ENCODE measurements at regions of chr1 and their contacts with region 1.

Region 1: GRCh38 chr1:214248311-214249085 is 32.5 kb upstream of the SMYD2 start:
- DNase-seq: no peak
- H3K4me3 ChIP-seq: no peak overlapping the region
- H3K27ac ChIP-seq: no peak overlapping the region
- H3K4me1 ChIP-seq: no peaks in the 10 kb centered on the region
- H3K27me3 ChIP-seq: peaks cover 4% of the 10 kb centered on the region
- CTCF ChIP-seq: no peak
- EP300 ChIP-seq: no peak
- POLR2A ChIP-seq: no peak

Region 2: GRCh38 chr1:214187121-214187900 is 61.2 kb before region 1 on chr1:
- in situ Hi-C with region 1: loop called in 1 of 4 experiments (anchors 10 kb)
- intact Hi-C with region 1: no loop called
- DNase-seq: no peak
- H3K4me3 ChIP-seq: peak overlapping the region in 1 of 4 donors; percentile 28
- H3K27ac ChIP-seq: no peak overlapping the region
- H3K4me1 ChIP-seq: peaks cover 0 to 6% (median 2%) of the 10 kb centered on the region in 4 donors
- H3K27me3 ChIP-seq: peaks cover 65% of the 10 kb centered on the region
- CTCF ChIP-seq: no peak
- EP300 ChIP-seq: no peak
- POLR2A ChIP-seq: no peak

Region 3: GRCh38 chr1:214213136-214213535 is 35.4 kb before region 1 on chr1:
- in situ Hi-C with region 1: no loop called
- intact Hi-C with region 1: no loop called
- DNase-seq: no peak
- H3K4me3 ChIP-seq: no peak overlapping the region
- H3K27ac ChIP-seq: no peak overlapping the region
- H3K4me1 ChIP-seq: peaks cover 0 to 4% (median 3%) of the 10 kb centered on the region in 4 donors
- H3K27me3 ChIP-seq: peaks cover 2% of the 10 kb centered on the region
- CTCF ChIP-seq: no peak
- EP300 ChIP-seq: no peak
- POLR2A ChIP-seq: no peak

Region 4: DNA sequence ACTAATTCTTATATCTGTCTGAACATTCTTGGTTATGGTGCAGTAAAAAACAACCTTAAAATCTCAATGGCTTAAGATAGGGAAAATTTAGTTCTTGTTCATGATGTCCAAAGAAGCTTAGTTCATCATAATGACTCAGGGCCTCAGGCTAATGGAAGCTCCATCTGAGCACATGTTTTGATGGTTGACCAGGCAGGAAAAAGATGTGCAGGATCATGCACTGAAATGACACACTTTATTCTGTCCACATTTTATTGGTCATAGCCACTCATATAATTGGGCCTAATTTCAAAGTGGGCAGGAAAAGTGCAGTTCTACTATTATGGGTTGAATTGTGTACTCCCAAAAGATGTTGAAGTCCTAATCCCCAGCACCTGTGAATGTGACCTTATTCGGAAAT is 552.7 kb after region 1 on chr1:
- in situ Hi-C with region 1: no loop called
- intact Hi-C with region 1: no loop called
- DNase-seq: no peak
- H3K4me3 ChIP-seq: no peak overlapping the region
- H3K27ac ChIP-seq: no peak overlapping the region
- H3K4me1 ChIP-seq: no peaks in the 10 kb centered on the region
- H3K27me3 ChIP-seq: no peaks in the 10 kb centered on the region
- CTCF ChIP-seq: no peak
- EP300 ChIP-seq: no peak
- POLR2A ChIP-seq: no peak